CD14-positive monocyte (primary cell): ENCODE measurements at regions of chr15 and their contacts with region 1.

Region 1: DNA sequence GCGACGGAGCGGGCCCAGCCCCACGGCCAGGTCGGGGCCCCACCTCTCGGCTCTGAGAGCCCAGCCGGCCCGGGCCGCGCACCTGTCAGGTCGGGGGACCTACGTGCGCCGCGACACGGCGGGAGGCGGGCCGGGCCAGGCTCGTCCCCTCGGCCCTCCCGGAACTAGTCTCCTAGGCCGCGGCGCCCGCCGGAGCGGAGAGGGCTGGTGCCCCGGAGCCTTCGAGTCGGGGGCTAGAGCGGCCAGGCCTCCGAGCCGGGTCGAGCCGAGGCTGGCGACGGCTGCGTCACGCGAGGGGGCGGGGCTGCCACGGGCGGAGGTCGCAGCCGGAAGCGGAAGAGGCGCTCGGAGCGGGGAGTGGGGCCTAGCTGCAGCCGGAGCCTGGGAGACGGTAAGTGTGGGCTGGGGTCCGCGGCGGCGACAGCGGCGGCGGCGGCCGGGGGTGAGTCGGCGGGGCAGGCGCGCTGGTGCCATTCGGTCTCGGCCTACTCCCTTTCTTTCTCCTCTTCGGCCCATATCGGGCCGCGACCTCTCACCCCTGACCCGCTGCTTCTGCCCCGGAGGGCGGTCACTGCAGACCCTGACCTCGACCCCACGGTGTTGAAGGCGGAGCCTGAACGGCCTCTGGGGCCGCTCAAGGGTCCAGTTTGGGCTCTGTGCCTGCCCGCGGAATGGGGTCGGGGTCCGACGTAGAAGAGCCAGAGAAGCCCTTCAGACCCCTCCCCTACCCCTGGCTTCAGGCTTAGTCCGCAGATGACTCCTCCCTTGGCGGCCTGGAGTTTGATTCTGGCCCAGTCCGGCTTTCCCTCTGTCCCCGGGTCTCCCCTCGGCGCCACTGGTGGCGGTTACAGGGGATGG is at the start of gene CLK3:
- DNase-seq: peak; percentile 88 to 91 (median 90)
- H3K4me3 ChIP-seq: peak within 1 kb of the TSS; percentile 92 to 99 (median 95)
- H3K4me3 Mint-ChIP-seq: peak within 1 kb of the TSS; percentile 93 to 94
- H3K27ac ChIP-seq: peak within 1 kb of the TSS; percentile 95 to 98
- H3K27ac Mint-ChIP-seq: peak within 1 kb of the TSS; percentile 94 to 97 (median 95)
- H3K4me1 ChIP-seq: peaks cover 15 to 28% of the 10 kb centered on the region in 2 donors
- H3K4me1 Mint-ChIP-seq: peaks cover 26% of the 10 kb centered on the region
- H3K27me3 ChIP-seq: no peaks in the 10 kb centered on the region
- H3K27me3 Mint-ChIP-seq: peaks cover 0 to 10% (median 2%) of the 10 kb centered on the region in 3 donors
- CTCF ChIP-seq: no peak
- polyA plus RNA-seq, gene CLK3: 27.6 to 354 (median 33.2) TPM

Region 2: GRCh38 chr15:74460871-74461846 is 154.6 kb before region 1 on chr15 and contains the start of gene UBL7:
- intact Hi-C with region 1: loop called (anchors 5 to 10 kb)
- DNase-seq: peak; percentile 94 to 96 (median 95)
- H3K4me3 ChIP-seq: peak within 1 kb of the TSS; percentile 63 to 93 (median 77)
- H3K4me3 Mint-ChIP-seq: peak within 1 kb of the TSS; percentile 94 to 95
- H3K27ac ChIP-seq: peak within 1 kb of the TSS; percentile 57 to 81
- H3K27ac Mint-ChIP-seq: peak within 1 kb of the TSS; percentile 86 to 96 (median 93)
- H3K4me1 ChIP-seq: peaks cover 18 to 27% of the 10 kb centered on the region in 2 donors
- H3K4me1 Mint-ChIP-seq: peaks cover 32% of the 10 kb centered on the region
- H3K27me3 ChIP-seq: no peaks in the 10 kb centered on the region
- H3K27me3 Mint-ChIP-seq: peaks cover 0 to 2% (median 0%) of the 10 kb centered on the region in 3 donors
- CTCF ChIP-seq: no peak
- polyA plus RNA-seq, gene UBL7: 43.4 to 103 (median 95.1) TPM

Region 3: GRCh38 chr15:74540761-74541493 is 74.8 kb before region 1 on chr15 and contains the start of gene ARID3B:
- intact Hi-C with region 1: loop called (anchors 5 to 10 kb)
- DNase-seq: peak; percentile 97 to 98 (median 97)
- H3K4me3 ChIP-seq: peak within 1 kb of the TSS; percentile 79 to 91 (median 84)
- H3K4me3 Mint-ChIP-seq: peak within 1 kb of the TSS; percentile 92 to 96
- H3K27ac ChIP-seq: peak within 1 kb of the TSS; percentile 69 to 84
- H3K27ac Mint-ChIP-seq: peak within 1 kb of the TSS; percentile 89 to 97 (median 95)
- H3K4me1 ChIP-seq: peaks cover 30 to 49% of the 10 kb centered on the region in 2 donors
- H3K4me1 Mint-ChIP-seq: peaks cover 46% of the 10 kb centered on the region
- H3K27me3 ChIP-seq: no peaks in the 10 kb centered on the region
- H3K27me3 Mint-ChIP-seq: peaks cover 3 to 8% (median 7%) of the 10 kb centered on the region in 3 donors
- CTCF ChIP-seq: no peak
- polyA plus RNA-seq, gene ARID3B: 2.3 to 17.4 (median 4.4) TPM

Region 4: GRCh38 chr15:74545880-74546656 is 69.7 kb before region 1 on chr15:
- intact Hi-C with region 1: loop called (anchors 5 to 10 kb)
- DNase-seq: peak; percentile 88 to 97 (median 91)
- H3K4me3 ChIP-seq: peak overlapping the region in 1 of 3 experiments; percentile 41
- H3K4me3 Mint-ChIP-seq: peak overlapping the region; percentile 49 to 78
- H3K27ac ChIP-seq: no peak overlapping the region
- H3K27ac Mint-ChIP-seq: peak overlapping the region in 6 of 7 donors; percentile 24 to 83 (median 52)
- H3K4me1 ChIP-seq: peaks cover 40 to 56% of the 10 kb centered on the region in 2 donors
- H3K4me1 Mint-ChIP-seq: peaks cover 60% of the 10 kb centered on the region
- H3K27me3 ChIP-seq: no peaks in the 10 kb centered on the region
- H3K27me3 Mint-ChIP-seq: peaks cover 5 to 11% (median 8%) of the 10 kb centered on the region in 3 donors
- CTCF ChIP-seq: no peak

Region 5: GRCh38 chr15:74598126-74598842 is 17.5 kb before region 1 on chr15:
- intact Hi-C with region 1: loop called (anchors 2 kb)
- DNase-seq: peak; percentile 74 to 86 (median 80)
- H3K4me3 ChIP-seq: peak overlapping the region; percentile 63 to 97 (median 73)
- H3K4me3 Mint-ChIP-seq: peak overlapping the region; percentile 97 to 100
- H3K27ac ChIP-seq: peak overlapping the region; percentile 65 to 85
- H3K27ac Mint-ChIP-seq: peak overlapping the region; percentile 91 to 99 (median 96)
- H3K4me1 ChIP-seq: peaks cover 13 to 15% of the 10 kb centered on the region in 2 donors
- H3K4me1 Mint-ChIP-seq: peaks cover 15% of the 10 kb centered on the region
- H3K27me3 ChIP-seq: no peaks in the 10 kb centered on the region
- H3K27me3 Mint-ChIP-seq: no peaks in the 10 kb centered on the region
- CTCF ChIP-seq: no peak